Motor neuron (in vitro differentiated cells): ENCODE measurements at regions of chr2 and their contacts with region 1.

Region 1: GRCh38 chr2:107627164-107627563 is 199.5 kb upstream of the RGPD4 start:
- ATAC-seq: no peak
- H3K4me3 ChIP-seq: no peak overlapping the region
- H3K27ac ChIP-seq: no peak overlapping the region
- H3K4me1 ChIP-seq: no peaks in the 10 kb centered on the region

Region 2: DNA sequence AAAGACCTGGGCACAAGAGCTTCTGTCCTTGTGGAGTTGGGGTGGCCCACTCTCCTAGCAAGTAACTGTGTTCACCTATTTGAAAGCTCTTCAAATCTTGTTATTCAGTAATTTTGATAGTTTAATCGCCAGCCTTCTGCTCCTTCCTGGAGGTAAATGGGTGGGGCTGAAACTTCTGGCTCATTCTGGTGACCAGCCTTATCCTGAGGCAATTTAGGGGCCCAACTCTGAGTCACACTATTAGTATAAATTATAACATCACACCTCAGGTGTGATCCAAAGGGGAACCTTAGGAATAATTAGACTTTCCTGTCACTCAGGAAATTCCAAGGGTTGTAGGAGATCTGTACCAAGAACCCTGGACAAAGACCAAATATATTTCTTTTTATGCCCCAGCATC is 56.3 kb before region 1 on chr2:
- in situ Hi-C with region 1: loop called in 1 of 9 experiments (anchors 10 kb)
- ATAC-seq: no peak
- H3K4me3 ChIP-seq: no peak overlapping the region
- H3K27ac ChIP-seq: no peak overlapping the region
- H3K4me1 ChIP-seq: no peaks in the 10 kb centered on the region

Region 3: GRCh38 chr2:109457794-109458193 is 1830.6 kb after region 1 on chr2:
- in situ Hi-C with region 1: no loop called
- ATAC-seq: peak in 2 of 8 experiments; percentile 24 to 45
- H3K4me3 ChIP-seq: no peak overlapping the region
- H3K27ac ChIP-seq: no peak overlapping the region
- H3K4me1 ChIP-seq: peaks cover 0 to 10% of the 10 kb centered on the region in 2 donors